Mammary epithelial cell (primary cell): ENCODE measurements at regions of chr3 and their contacts with region 1.

Region 1: GRCh38 chr3:73868688-73869315 is 244.1 kb upstream of the PDZRN3 start:
- DNase-seq: peak; percentile 23
- H3K4me3 ChIP-seq: no peak overlapping the region
- H3K27ac ChIP-seq: no peak overlapping the region
- H3K4me1 ChIP-seq: no peaks in the 10 kb centered on the region
- H3K27me3 ChIP-seq: no peaks in the 10 kb centered on the region
- CTCF ChIP-seq: peak; percentile 40 to 63

Region 2: GRCh38 chr3:74067296-74067695 is 198.5 kb after region 1 on chr3:
- CTCF ChIA-PET with region 1: no interaction called
- dilution Hi-C with region 1: no loop called
- in situ Hi-C with region 1: no loop called
- intact Hi-C with region 1: loop called (anchors 2 kb)
- DNase-seq: peak; percentile 29
- H3K4me3 ChIP-seq: no peak overlapping the region
- H3K27ac ChIP-seq: no peak overlapping the region
- H3K4me1 ChIP-seq: no peaks in the 10 kb centered on the region
- H3K27me3 ChIP-seq: peaks cover 5% of the 10 kb centered on the region
- CTCF ChIP-seq: peak; percentile 22 to 50

Region 3: DNA sequence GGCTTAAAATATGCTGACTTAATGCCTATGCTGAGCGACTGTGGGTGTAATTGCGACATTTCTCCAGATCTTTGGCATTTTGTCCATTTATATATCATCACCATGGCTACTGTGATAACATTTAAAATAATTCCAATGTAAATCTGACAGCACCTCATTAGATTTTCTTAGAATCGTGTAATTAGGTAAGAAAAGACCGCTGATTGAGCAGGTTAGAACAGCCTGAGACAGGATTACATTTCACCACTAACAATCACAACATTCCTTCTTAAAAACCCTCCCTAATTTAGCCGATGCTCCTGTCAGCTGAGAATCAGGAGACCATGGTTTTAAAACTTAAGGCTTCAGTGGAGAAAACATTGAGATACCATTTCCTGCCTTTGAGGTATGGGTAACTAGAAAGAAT is 211.3 kb after region 1 on chr3:
- CTCF ChIA-PET with region 1: no interaction called
- dilution Hi-C with region 1: no loop called
- in situ Hi-C with region 1: no loop called
- intact Hi-C with region 1: no loop called
- DNase-seq: no peak
- H3K4me3 ChIP-seq: no peak overlapping the region
- H3K27ac ChIP-seq: no peak overlapping the region
- H3K4me1 ChIP-seq: no peaks in the 10 kb centered on the region
- H3K27me3 ChIP-seq: no peaks in the 10 kb centered on the region
- CTCF ChIP-seq: no peak

Region 4: DNA sequence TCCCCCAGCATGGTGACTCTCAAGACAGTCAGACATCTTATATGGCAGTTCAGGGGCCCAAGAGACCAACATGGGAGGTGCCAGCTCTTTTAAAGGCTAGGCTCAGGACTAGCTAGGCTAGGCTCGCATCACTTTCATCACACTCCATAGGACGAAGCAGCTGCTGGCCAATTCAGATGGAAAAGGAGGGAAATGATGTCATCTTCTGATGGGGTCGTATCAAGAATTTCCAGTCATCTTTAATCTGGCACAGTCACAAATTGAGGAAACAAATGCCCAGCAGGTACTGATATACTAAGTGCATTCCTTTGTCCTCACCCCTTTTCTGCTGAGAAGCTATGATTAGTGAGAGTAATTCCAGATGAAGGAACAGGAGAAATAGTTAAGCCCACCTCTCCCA is 384.8 kb after region 1 on chr3:
- CTCF ChIA-PET with region 1: interaction called, 23 read pairs
- dilution Hi-C with region 1: no loop called
- in situ Hi-C with region 1: no loop called
- intact Hi-C with region 1: no loop called
- DNase-seq: no peak
- H3K4me3 ChIP-seq: no peak overlapping the region
- H3K27ac ChIP-seq: no peak overlapping the region
- H3K4me1 ChIP-seq: no peaks in the 10 kb centered on the region
- H3K27me3 ChIP-seq: no peaks in the 10 kb centered on the region
- CTCF ChIP-seq: no peak

Region 5: DNA sequence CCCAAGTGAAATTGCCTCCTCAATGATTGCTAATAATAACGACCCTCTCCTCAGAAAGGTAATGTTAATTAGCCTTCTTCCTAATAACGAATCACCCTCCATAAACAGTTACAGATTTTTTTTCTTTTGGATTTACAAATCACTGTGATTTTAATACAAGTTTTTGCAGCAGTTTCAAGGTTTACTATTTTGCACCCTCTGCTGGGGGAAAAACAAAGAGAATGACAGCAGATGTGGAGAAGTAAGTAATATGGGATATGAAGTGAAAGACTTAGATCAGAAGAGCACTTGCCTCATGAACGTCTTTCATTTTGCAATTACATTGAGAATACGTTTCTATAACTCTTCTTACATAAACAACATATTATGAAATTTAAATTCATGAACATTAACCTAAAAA is 761.8 kb after region 1 on chr3:
- CTCF ChIA-PET with region 1: no interaction called
- dilution Hi-C with region 1: no loop called
- in situ Hi-C with region 1: no loop called
- intact Hi-C with region 1: loop called (anchors 10 kb)
- DNase-seq: peak; percentile 46
- H3K4me3 ChIP-seq: no peak overlapping the region
- H3K27ac ChIP-seq: no peak overlapping the region
- H3K4me1 ChIP-seq: peaks cover 6% of the 10 kb centered on the region
- H3K27me3 ChIP-seq: no peaks in the 10 kb centered on the region
- CTCF ChIP-seq: peak; percentile 27 to 57

Region 6: DNA sequence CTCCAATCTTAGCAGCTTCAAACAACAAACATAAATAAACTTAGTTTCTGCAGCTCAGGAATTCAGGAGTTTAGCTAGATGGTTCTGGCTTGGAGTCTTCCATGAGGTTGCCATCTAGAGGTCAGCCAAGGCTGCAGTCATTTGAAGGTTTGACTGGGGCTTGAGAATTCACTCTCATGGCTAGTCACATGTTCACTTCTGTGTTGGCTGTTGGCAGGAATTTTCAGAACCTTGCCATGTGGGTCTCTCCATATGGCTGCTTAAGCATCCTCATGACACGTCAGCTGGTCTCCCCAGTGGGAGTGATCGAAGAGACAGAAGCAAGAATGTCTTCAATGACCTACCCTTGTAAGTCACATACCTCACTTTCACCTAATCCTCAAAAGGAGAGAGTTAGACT is 1014.9 kb after region 1 on chr3:
- CTCF ChIA-PET with region 1: no interaction called
- dilution Hi-C with region 1: no loop called
- in situ Hi-C with region 1: no loop called
- intact Hi-C with region 1: loop called (anchors 5 kb)
- DNase-seq: peak; percentile 31
- H3K4me3 ChIP-seq: no peak overlapping the region
- H3K27ac ChIP-seq: no peak overlapping the region
- H3K4me1 ChIP-seq: no peaks in the 10 kb centered on the region
- H3K27me3 ChIP-seq: no peaks in the 10 kb centered on the region
- CTCF ChIP-seq: peak; percentile 64 to 80

Region 7: DNA sequence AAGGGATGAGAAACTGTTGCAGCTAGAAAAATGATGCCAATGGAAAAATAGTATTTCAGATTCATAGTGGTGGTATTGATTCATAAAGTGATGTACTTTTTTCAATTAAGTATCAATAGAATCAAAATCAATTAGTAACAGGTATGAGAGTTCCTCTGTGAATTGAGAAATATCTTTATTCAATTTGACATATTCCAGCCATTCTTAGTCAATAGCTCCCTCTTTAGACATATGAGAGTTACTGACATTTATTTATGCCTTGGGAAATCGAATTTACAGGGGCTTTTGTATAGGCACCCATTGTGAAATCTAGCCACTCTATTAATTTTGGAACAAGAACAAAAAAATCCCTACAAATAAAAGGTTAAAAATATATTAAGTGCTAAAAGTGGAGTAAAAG is 1132.5 kb after region 1 on chr3:
- CTCF ChIA-PET with region 1: no interaction called
- dilution Hi-C with region 1: no loop called
- in situ Hi-C with region 1: no loop called
- intact Hi-C with region 1: loop called (anchors 2 kb)
- DNase-seq: peak; percentile 5
- H3K4me3 ChIP-seq: no peak overlapping the region
- H3K27ac ChIP-seq: no peak overlapping the region
- H3K4me1 ChIP-seq: no peaks in the 10 kb centered on the region
- H3K27me3 ChIP-seq: no peaks in the 10 kb centered on the region
- CTCF ChIP-seq: peak; percentile 57 to 60

Region 8: DNA sequence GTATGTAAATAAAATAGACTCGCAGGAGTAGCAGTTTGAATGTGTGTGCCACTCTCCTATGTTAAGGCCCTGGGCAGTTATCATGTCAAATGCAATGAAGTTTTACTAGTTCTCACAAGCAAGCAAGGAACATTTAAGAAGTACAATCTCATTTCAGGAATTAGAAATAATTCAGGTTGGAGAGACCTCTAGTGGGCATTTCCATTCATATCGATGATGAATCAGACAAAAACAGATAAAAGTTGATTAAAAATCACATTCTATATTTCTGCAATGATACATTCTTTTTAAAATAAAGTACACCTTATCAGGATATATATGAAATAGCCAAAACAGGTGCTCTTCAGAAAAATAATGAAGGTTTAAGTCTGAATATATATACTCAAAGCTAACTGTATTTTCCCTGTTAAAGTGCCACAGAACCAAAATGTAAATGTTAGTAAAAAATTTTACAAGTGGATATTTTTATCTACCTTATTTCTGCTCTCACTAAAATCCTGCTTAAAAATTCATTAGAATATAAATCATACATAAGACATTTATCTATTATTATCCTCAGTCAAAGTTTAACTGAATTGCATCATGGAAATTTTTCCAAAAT is 1302.9 kb after region 1 on chr3:
- CTCF ChIA-PET with region 1: no interaction called
- dilution Hi-C with region 1: no loop called
- in situ Hi-C with region 1: no loop called
- intact Hi-C with region 1: loop called (anchors 1 kb)
- DNase-seq: no peak
- H3K4me3 ChIP-seq: no peak overlapping the region
- H3K27ac ChIP-seq: no peak overlapping the region
- H3K4me1 ChIP-seq: no peaks in the 10 kb centered on the region
- H3K27me3 ChIP-seq: peaks cover 2% of the 10 kb centered on the region
- CTCF ChIP-seq: peak; percentile 47 to 49